Activated naive CD4-positive, alpha-beta T cell treated with anti-CD3 and anti-CD28 coated beads for 36 hours (primary cell): ENCODE measurements at regions of chr20 and their contacts with region 1.

Region 1: DNA sequence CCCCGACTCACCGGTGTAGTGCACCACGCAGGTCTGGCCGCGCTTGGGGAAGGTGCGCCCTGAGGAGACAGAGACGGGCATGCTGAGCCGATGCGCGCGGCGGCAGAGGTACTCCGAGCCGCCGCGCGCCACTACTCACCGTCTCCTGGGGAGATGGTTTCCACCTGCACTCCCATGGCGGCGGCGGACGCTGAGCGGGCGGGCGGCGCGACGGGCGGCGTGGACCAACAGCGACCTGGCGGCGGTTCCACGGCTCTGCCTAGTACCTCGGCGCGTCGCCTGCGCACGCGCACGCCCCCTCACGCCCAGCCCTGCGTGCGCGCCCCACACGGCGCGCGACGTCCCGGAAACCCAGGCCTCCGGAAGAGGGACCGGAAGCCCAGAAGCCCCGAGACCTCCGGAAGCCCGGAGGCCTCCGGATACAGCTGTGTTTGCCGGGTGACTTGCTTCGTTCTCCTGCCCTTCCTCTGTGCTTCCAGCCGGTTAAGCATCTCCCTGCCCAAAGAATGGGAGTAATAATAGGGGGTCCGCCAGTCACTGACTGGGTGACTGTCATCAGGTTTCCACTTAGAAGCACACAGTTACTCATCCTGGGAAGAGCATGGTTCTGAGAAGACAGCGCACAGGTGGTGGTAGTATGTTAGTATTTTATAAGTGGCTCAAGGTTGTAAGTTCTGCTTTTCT is at the start of gene FKBP1A:
- DNase-seq: peak; percentile 92
- H3K4me3 Mint-ChIP-seq: peak within 1 kb of the TSS; percentile 91
- H3K27ac Mint-ChIP-seq: peak within 1 kb of the TSS; percentile 88
- H3K4me1 Mint-ChIP-seq: peaks cover 54% of the 10 kb centered on the region
- H3K27me3 Mint-ChIP-seq: no peaks in the 10 kb centered on the region
- total RNA-seq, gene FKBP1A: 232 to 237 TPM

Region 2: DNA sequence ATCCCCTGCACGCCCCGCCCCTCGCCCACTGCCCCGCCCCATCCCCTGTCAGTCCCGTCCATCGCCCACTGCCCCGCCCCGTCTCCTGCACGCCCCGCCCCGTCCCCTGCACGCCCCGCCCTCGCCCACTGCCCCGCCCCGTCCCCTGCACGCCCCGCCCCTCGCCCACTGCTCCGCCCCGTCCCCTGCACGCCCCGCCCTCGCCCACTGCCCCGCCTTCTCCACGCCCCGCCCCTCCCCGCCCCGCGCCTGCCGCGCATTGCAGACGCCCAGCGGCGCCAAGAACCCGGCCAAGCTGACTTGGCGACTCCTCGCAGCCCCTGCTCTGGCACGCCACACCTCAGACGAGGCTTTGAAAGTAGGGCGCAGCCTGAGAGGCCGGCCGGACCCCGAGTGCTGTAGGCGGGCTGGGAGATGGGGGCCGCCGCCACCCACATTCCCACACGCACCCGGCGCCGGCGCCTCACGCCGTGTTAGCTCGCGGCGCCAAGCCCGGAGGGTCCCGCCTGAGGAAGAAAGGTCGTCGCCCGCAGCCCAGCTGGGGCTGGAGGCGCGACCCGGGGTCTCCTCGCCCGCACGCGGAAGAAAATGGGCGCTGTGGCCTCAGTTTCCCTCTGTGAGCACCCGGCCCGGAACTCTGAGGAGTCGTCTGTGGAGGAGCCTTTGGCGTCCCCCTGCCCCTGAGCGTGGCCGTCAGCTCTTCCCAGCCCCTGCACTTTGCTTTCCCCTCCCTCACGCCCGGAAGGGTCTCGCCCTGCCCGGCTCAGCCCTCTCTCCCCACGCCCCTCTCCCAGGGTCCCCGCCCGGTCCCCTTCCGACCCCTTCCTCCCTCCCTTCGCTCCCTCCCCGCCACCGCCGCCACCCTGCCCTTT is 166.9 kb before region 1 on chr20 and contains the start of gene RAD21L1:
- CTCF ChIA-PET with region 1: no interaction called
- intact Hi-C with region 1: loop called (anchors 2 kb)
- DNase-seq: peak; percentile 88
- H3K4me3 Mint-ChIP-seq: peak within 1 kb of the TSS; percentile 83
- H3K27ac Mint-ChIP-seq: no peak within 1 kb of the TSS
- H3K4me1 Mint-ChIP-seq: peaks cover 10% of the 10 kb centered on the region
- H3K27me3 Mint-ChIP-seq: peaks cover 6% of the 10 kb centered on the region
- total RNA-seq, gene RAD21L1: not detected

Region 3: DNA sequence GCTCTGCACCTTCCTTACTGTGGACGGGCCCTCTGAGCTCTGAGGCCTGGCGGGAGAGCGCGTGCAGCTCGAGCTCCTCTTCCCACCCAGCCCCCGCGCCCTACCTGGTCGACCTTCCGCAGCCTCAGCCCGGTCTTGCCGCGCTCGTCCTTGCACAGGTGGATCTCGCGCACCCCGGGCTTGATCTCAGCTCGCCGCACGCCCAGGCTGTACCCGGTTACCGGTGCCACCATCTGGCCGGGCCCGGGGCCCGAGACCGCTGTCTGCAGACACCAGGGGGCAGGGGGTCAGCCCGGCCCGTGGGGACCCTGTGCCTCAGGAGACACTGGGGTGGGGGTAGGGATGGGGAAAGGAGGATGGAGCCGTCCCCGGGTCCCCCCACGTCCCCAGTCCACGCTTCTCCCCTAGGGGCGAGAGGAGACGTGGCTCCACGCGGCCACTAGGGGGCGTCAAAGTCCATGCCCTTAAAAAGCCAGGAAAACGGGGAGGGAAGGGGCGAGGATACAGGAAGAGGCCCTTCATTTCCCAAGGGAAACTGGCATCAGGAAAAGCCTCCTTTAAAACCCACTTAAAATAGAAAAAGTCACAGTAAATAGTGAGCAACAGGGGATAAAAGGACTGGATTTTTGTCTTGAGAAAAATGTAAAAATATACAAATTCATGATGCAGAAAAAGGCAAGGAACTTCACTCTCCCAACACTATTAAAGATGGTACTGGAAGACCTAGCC is 79.6 kb before region 1 on chr20:
- CTCF ChIA-PET with region 1: interaction called, 13 read pairs
- intact Hi-C with region 1: loop called (anchors 2 kb)
- DNase-seq: peak; percentile 65
- H3K4me3 Mint-ChIP-seq: no peak overlapping the region
- H3K27ac Mint-ChIP-seq: no peak overlapping the region
- H3K4me1 Mint-ChIP-seq: peaks cover 6% of the 10 kb centered on the region
- H3K27me3 Mint-ChIP-seq: no peaks in the 10 kb centered on the region

Region 4: DNA sequence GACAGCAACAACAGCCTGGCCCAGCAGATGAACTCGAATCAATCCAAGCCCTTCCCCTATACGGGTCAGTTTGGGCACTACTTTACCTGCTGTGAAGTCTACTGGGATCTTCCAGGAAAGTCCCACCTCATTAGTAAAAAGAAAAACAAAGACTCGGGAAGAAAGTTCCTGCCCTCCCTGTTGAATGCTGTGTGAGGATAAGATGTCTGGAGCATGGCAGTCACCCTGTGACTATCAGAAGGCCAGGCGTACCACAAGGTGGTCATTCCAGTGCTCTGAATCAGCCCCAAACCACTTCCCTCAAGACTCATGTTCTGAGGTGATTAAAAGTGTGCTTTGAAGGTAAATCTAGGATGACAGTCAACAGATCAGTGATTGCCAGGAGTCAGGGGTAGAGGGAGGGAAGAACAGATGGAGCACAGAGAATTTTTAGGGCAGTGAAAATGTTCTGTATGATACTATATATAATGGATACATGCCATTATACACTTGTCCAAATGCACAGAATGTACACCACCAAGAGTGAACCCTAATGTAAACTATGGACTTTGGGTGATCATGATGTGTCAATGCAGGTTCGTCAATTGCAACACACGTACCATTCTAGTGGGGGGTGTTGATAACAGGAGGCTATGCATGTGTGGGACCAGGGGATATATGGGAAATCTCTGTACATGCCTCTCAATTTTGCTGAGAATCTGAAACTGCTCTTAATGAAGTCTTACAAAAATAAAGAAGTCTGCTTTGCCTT is 14.8 kb before region 1 on chr20:
- CTCF ChIA-PET with region 1: interaction called, 4 read pairs
- intact Hi-C with region 1: loop called (anchors 1 kb)
- DNase-seq: peak; percentile 48
- H3K4me3 Mint-ChIP-seq: no peak overlapping the region
- H3K27ac Mint-ChIP-seq: peak overlapping the region; percentile 89
- H3K4me1 Mint-ChIP-seq: peaks cover 81% of the 10 kb centered on the region
- H3K27me3 Mint-ChIP-seq: no peaks in the 10 kb centered on the region

Region 5: DNA sequence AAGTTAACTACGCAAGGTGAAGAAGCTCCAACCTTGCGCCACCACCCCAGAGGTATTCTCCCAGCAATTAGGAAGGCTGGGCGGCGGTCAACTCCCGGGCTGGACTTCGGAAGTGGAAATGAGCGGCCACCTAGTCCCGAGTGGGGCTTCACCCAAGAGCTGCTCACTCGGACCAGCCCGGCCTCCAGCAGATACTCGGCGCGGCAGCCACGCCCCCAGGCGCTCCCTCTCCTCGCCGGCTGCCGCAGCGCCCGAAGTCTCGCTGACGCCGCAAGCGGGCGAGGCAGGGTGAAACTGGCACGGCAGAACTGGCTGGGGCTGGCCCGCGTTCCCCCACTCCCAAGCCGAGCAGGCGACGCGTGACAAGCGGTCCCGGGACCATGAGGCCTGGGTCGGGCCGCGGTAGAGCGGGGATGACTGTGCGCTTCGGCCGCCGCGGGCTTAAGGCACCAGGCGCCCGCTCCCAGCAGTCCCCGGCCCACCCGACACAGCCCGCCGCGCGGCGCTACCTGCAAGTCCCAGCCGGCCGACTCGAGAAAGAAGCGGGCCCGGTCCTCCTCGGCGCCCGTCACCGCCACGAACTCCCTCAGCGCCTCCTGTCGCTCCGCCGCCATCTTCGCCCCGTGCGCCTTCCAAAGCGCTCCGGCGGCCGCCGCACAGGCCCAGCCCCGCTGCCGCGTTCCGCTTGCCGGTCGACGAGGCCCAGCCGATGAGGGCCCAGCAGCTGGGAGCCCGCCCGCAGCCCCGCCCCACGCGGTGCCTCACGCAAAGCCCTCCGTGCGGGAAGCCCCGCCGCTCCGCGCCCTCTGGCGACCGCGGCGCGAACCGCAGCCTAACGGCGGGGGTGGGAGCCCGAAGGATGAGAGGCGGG is 73.5 kb after region 1 on chr20 and contains the start of gene NSFL1C:
- CTCF ChIA-PET with region 1: no interaction called
- intact Hi-C with region 1: loop called (anchors 1 kb)
- DNase-seq: peak; percentile 97
- H3K4me3 Mint-ChIP-seq: peak within 1 kb of the TSS; percentile 80
- H3K27ac Mint-ChIP-seq: peak within 1 kb of the TSS; percentile 71
- H3K4me1 Mint-ChIP-seq: peaks cover 44% of the 10 kb centered on the region
- H3K27me3 Mint-ChIP-seq: peaks cover 6% of the 10 kb centered on the region
- total RNA-seq, gene NSFL1C: 80.4 to 84.1 TPM